Endothelial cell of umbilical vein (primary cell): ENCODE measurements at regions of chr6 and their contacts with region 1.

Region 1: GRCh38 chr6:167826230-167826895 is 348 bp upstream of the AFDN start:
- DNase-seq: no peak
- H3K4me3 ChIP-seq: peak overlapping the region; percentile 92 to 98 (median 97)
- H3K27ac ChIP-seq: peak overlapping the region; percentile 37
- H3K4me1 ChIP-seq: peaks cover 35% of the 10 kb centered on the region
- H3K27me3 ChIP-seq: no peaks in the 10 kb centered on the region
- CTCF ChIP-seq: peak; percentile 20 to 49
- POLR2A ChIP-seq: no peak

Region 2: GRCh38 chr6:167485186-167485978 is 341.0 kb before region 1 on chr6:
- CTCF ChIA-PET with region 1: interaction called, 20 read pairs
- POLR2A ChIA-PET with region 1: no interaction called
- dilution Hi-C with region 1: no loop called
- intact Hi-C with region 1: loop called (anchors 2 kb)
- DNase-seq: peak; percentile 55
- H3K4me3 ChIP-seq: no peak overlapping the region
- H3K27ac ChIP-seq: no peak overlapping the region
- H3K4me1 ChIP-seq: peaks cover 3% of the 10 kb centered on the region
- H3K27me3 ChIP-seq: peaks cover 0 to 2% of the 10 kb centered on the region in 2 experiments
- CTCF ChIP-seq: peak; percentile 45 to 52
- POLR2A ChIP-seq: no peak

Region 3: DNA sequence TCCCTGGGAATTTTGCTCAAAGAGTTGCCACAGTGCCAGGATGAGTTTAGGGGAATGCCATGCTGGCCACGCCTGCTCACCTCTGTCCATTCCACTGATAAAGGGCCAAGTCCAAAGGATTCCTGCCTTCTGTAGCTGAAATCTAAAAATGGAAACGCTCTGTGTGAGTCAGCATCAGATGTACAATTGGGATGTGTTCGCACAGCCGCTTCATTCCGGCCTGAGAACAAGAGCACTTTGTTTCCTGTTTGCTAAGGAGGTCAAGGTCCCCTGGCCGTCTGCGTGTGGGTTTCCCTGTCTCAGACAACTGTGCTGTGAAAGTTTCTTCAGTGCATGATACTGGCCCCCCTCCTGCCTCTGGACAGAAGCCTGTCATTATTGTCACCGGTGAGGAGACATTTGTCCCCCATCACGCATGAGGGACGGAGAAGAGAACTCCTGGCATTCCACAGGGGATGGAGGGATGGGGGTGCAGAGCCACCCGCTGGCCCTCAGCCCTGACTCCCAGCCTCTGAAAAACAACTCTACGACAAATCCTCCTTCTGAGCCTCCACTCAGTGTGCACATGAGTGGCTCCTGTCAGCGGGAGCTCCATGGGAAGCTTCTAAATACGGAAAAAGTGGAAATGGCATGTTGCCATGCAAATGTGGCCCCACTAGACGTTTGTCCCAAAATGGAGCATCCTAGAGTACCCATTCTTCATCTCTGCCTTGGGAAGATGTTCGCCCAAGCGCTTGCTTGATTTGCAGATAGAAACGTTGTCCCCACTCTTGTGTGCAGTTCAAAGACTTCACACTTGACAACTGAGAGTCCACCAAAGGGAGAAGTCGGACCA is 143.1 kb before region 1 on chr6:
- CTCF ChIA-PET with region 1: no interaction called
- POLR2A ChIA-PET with region 1: no interaction called
- dilution Hi-C with region 1: no loop called
- intact Hi-C with region 1: loop called (anchors 5 kb)
- DNase-seq: peak; percentile 94
- H3K4me3 ChIP-seq: no peak overlapping the region
- H3K27ac ChIP-seq: peak overlapping the region; percentile 76
- H3K4me1 ChIP-seq: peaks cover 24% of the 10 kb centered on the region
- H3K27me3 ChIP-seq: peaks cover 0 to under 1% of the 10 kb centered on the region in 2 experiments
- CTCF ChIP-seq: no peak
- POLR2A ChIP-seq: no peak

Region 4: GRCh38 chr6:167838207-167838748 is 11.9 kb after region 1 on chr6:
- CTCF ChIA-PET with region 1: interaction called, 4 read pairs
- POLR2A ChIA-PET with region 1: no interaction called
- dilution Hi-C with region 1: no loop called
- intact Hi-C with region 1: loop called (anchors 1 kb)
- DNase-seq: no peak
- H3K4me3 ChIP-seq: no peak overlapping the region
- H3K27ac ChIP-seq: no peak overlapping the region
- H3K4me1 ChIP-seq: no peaks in the 10 kb centered on the region
- H3K27me3 ChIP-seq: no peaks in the 10 kb centered on the region
- CTCF ChIP-seq: no peak
- POLR2A ChIP-seq: no peak

Region 5: DNA sequence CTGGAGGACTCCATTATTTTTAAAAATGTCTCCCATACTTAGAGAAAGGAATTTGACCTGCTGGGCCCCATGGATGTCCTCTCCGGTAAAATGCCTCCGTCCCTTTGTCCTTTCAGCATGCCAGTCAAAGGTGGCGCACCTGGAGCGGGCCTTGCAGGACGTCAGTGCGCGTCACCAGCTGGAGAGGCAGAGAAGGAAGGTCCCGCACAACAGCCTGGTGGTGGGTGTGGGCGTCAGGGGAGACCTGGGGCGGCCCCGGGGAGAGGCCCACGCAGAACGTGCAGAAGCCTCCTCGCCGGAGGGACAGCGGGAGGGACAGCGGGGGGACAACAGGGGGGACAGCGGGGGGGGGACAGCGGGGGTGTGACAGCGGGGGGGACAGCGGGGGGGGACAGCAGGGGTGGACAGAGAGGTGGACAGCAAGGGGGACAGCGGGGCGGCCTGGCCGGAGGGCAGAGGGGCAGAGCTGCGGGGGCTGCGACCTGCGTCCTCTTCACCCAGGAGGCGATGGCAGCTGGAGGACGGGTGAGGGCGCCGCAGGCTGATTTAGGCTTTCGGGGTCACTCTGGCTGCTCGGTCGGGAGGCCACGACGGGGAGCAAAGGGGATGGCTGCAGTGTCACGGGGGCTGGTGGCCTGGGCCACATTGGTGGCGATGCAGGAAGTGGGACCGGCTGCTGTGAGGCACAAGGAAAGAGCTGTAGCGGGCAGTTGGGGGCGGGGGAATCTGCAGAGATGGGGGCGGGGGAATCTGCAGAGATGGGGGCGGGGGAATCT is 170.2 kb after region 1 on chr6:
- CTCF ChIA-PET with region 1: no interaction called
- POLR2A ChIA-PET with region 1: no interaction called
- dilution Hi-C with region 1: no loop called
- intact Hi-C with region 1: no loop called
- DNase-seq: no peak
- H3K4me3 ChIP-seq: no peak overlapping the region
- H3K27ac ChIP-seq: no peak overlapping the region
- H3K4me1 ChIP-seq: peaks cover 13% of the 10 kb centered on the region
- H3K27me3 ChIP-seq: no peaks in the 10 kb centered on the region
- CTCF ChIP-seq: no peak
- POLR2A ChIP-seq: no peak

Region 6: DNA sequence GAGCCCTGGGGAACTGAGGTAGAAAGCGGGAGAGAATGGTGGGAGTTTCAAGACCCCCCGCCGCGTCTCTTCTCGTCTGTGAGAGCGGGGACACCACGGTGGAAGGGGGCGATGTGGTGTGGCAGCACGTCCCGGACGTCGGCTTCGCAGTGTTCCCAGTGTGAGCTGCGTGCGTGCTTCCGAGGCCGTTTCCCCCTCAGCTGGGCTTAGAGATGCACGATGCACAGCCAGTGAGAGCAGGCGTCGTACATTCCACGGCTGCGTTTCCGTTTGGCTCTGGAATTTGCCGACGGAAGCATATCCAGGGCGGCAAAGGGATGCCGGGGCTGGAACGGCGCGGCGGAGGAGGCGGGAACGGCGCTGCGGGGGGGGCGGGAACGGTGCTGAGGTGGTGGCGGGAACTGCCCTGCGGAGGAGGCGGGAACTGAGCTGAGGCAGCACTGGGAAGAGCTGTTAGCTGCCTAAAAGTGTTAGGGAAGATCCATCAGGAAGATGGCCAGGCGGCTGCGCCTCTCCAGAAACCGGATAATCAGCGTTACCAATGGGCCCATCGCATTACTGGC is 208.8 kb after region 1 on chr6:
- CTCF ChIA-PET with region 1: no interaction called
- POLR2A ChIA-PET with region 1: no interaction called
- dilution Hi-C with region 1: no loop called
- intact Hi-C with region 1: loop called (anchors 10 kb)
- DNase-seq: peak; percentile 36
- H3K4me3 ChIP-seq: peak overlapping the region in 2 of 3 experiments; percentile 10 to 27
- H3K27ac ChIP-seq: peak overlapping the region; percentile 50
- H3K4me1 ChIP-seq: peaks cover 25% of the 10 kb centered on the region
- H3K27me3 ChIP-seq: no peaks in the 10 kb centered on the region
- CTCF ChIP-seq: no peak
- POLR2A ChIP-seq: no peak